ENCODE measurements at regions of chr4 and their contacts with region 1.

Region 1: GRCh38 chr4:180828440-180829018 is 1414.7 kb upstream of the TENM3 start:
- DNase-seq: peak; percentile 78
- H3K4me3 ChIP-seq: no peak overlapping the region
- H3K27ac ChIP-seq: no peak overlapping the region
- H3K4me1 ChIP-seq: 0 out of 2 replicates have a peak, but pooled peaks cover 4% of the 10 kb centered on the region
- H3K27me3 ChIP-seq: no peaks in the 10 kb centered on the region

Region 2: DNA sequence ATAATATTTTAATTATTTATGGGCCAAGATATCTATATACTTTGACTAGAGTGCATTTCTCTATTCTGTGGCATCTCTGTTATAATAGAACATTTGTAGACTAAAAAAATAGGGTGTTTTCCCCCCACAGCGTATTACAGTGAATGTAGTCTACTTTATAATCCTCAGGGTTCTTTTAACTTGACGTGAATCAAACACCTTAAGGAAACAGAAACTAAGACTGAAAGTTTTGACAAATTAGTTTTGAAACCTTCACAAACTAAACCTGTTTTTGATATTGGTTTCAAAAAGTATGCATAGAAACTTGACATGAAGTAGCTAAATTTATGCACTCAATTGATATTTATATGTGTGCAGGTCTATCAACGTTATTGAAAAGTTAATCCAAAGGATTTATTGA is 548.5 kb before region 1 on chr4:
- in situ Hi-C with region 1: no loop called
- DNase-seq: no peak
- H3K4me3 ChIP-seq: no peak overlapping the region
- H3K27ac ChIP-seq: no peak overlapping the region
- H3K4me1 ChIP-seq: no peaks in the 10 kb centered on the region
- H3K27me3 ChIP-seq: no peaks in the 10 kb centered on the region

Region 3: DNA sequence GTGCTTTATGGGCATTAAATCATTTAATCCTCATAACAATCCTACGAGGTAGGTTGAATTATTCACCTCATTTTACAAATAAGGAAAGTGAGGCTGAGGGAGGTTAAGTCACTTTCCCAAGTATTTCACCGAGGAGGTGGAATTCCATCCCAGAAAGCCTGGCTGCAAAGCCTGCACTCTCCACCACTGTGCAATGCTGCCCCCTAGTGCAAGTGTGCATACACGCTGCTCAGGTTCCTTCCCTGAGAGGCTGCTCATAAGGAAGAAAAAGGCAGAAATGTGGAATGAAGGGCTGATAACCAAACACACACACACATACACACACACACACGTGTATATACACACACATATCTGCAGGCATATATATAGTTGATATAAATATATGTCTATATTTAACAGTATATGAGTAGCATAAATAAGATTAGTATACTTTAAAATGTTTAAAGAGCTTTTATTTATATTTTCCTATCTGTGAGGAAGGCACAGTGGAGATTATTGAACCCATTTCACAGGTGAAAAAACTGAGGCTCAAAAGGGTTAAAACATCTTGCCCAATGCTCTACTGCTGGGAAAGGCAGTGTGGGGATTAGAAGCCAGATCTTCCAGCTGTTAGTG is 700.1 kb after region 1 on chr4:
- in situ Hi-C with region 1: loop called (anchors 25 kb)
- DNase-seq: peak; percentile 71
- H3K4me3 ChIP-seq: no peak overlapping the region
- H3K27ac ChIP-seq: no peak overlapping the region
- H3K4me1 ChIP-seq: no peaks in the 10 kb centered on the region
- H3K27me3 ChIP-seq: no peaks in the 10 kb centered on the region

Measured in GM23248 (cell line).